CD4-positive, alpha-beta memory T cell (primary cell): ENCODE measurements at regions of chr7 and their contacts with region 1.

Region 1: DNA sequence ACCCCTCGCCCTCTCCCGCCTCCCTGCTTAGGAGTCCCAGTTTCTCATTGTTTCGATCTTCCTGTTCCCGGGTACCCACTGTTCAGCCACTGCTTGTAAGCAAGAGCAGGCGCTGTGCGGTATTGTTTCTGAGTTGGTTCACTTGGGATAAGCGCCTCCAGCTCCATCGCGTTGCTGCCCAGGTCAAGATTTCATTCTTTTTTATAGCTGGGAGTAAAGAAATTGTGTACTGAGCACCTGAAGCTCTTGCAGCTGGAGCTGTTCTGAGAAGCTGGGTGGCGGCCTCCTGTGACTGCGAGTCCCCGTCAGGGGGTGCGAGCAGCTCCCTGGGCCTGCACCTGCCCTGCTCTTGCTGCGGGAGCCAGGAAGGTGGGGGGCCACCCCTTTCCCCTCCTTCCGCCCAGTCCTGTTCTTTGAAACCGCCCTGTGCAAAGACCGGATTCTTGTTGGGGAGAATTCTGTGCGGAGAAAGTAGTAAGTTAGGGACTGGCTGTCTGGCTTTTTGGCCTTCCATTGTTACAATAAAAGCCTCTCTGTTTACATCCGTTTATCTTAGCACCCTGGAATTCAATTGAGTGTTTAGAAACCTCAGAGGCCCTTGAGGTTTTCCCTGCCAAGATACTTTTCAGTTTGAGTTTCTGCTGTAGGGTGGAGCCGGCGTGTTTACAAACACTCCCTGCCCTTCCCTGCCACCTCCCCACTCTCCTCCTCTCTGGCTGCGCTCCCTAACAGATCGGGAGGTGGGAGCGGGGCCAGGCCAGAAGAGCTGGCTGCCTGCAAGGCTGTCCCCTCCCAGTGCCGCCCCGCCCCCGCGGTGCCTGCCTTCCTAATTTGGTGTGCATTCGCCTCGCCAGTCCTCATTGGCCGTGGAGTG is 30.8 kb upstream of the AP5Z1 start:
- DNase-seq: peak; percentile 75 to 84 (median 80)
- H3K4me3 ChIP-seq: peak overlapping the region; percentile 20 to 59
- H3K4me3 Mint-ChIP-seq: peak overlapping the region; percentile 80 to 91 (median 87)
- H3K27ac ChIP-seq: peak overlapping the region; percentile 63
- H3K27ac Mint-ChIP-seq: peak overlapping the region; percentile 86 to 99 (median 95)
- H3K4me1 ChIP-seq: peaks cover 66% of the 10 kb centered on the region
- H3K4me1 Mint-ChIP-seq: peaks cover 41 to 76% (median 58%) of the 10 kb centered on the region in 4 donors
- H3K27me3 ChIP-seq: no peaks in the 10 kb centered on the region
- H3K27me3 Mint-ChIP-seq: no peaks in the 10 kb centered on the region

Region 2: GRCh38 chr7:4659551-4660286 is 84.9 kb before region 1 on chr7:
- CTCF ChIA-PET with region 1: no interaction called
- POLR2A ChIA-PET with region 1: no interaction called
- intact Hi-C with region 1: no loop called
- DNase-seq: no peak
- H3K4me3 ChIP-seq: no peak overlapping the region
- H3K4me3 Mint-ChIP-seq: no peak overlapping the region
- H3K27ac ChIP-seq: no peak overlapping the region
- H3K27ac Mint-ChIP-seq: peak overlapping the region in 1 of 7 donors; percentile 48
- H3K4me1 ChIP-seq: no peaks in the 10 kb centered on the region
- H3K4me1 Mint-ChIP-seq: peaks cover 0 to 5% (median under 1%) of the 10 kb centered on the region in 4 donors
- H3K27me3 ChIP-seq: no peaks in the 10 kb centered on the region
- H3K27me3 Mint-ChIP-seq: peaks cover 0 to 7% of the 10 kb centered on the region in 2 donors

Region 3: DNA sequence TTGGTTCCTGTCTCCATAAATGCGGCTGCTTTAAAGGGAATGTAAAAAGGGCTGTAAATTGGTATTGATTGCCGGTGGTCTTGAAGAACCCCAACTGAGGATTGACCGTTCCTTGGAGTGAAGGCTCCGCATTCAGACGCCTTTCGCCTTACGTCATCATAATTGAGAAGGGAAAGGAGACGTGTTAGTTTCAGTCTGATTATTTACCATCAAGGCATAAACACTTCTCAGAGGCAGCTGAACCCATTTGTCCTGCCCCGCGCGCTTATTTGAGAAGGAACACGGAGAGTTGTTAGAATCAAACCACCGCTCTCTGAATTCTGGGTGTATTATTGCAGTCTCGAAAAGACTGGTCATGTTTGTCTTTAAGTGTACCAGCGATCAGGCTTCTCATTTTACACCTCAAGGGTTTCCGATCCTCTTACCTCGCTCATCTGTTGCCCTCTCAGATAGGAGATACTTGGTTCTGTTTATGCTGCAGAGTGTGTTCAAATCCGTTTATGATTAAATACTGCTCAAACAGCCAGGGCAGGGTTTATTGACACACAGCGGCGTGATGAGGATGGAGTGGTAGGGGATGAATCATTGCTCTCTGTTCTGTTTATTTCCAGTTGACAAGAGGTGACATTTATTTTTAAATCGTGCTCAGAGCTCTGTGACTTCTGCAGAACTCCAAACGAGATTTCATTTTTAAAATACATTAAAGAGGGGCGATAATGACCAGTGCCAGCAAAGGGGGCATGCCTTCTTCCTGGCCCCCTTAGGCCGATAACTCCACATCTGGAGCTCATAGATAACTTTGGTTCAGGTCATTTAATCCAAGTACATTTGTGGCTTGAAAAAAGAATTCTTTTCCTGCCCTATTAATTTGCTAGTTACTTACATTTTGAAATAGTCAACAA is 32.1 kb before region 1 on chr7:
- CTCF ChIA-PET with region 1: no interaction called
- POLR2A ChIA-PET with region 1: no interaction called
- intact Hi-C with region 1: no loop called
- DNase-seq: no peak
- H3K4me3 ChIP-seq: no peak overlapping the region
- H3K4me3 Mint-ChIP-seq: peak overlapping the region in 6 of 8 donors; percentile 7 to 68 (median 38)
- H3K27ac ChIP-seq: no peak overlapping the region
- H3K27ac Mint-ChIP-seq: peak overlapping the region in 6 of 7 donors; percentile 36 to 80 (median 64)
- H3K4me1 ChIP-seq: peaks cover 35% of the 10 kb centered on the region
- H3K4me1 Mint-ChIP-seq: peaks cover 37 to 88% (median 64%) of the 10 kb centered on the region in 4 donors
- H3K27me3 ChIP-seq: no peaks in the 10 kb centered on the region
- H3K27me3 Mint-ChIP-seq: no peaks in the 10 kb centered on the region

Region 4: DNA sequence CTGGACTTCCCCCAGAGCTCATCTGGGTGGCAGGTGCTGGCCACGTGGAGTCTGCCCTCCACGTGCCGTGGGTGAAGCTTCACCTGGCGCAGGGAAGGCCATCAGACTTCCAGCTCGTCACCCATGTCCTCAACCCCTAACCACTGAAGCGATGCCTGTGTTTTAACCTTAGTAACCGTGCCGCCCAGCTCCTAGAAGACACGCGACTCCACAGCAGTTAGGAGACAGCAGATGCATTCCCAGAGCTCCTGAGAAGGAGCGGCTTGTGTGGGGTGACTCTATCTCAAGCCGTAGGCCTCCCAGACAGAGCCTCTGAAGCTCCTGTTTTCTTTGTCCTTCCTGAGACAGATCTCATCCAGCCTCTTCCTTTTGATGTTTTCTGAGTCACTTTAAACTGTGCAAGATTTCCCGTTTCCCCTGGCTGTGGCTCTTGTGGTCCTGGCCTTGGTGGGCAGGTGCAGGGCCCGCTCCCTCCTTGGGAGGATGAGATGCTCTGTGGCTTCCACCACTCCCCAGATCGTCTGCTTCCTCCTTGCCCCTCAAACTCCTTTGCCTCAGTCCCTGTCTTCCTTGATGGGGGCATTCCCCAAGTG is 10.6 kb before region 1 on chr7:
- CTCF ChIA-PET with region 1: interaction called, 12 read pairs
- POLR2A ChIA-PET with region 1: interaction called, 3 read pairs
- intact Hi-C with region 1: no loop called
- DNase-seq: no peak
- H3K4me3 ChIP-seq: no peak overlapping the region
- H3K4me3 Mint-ChIP-seq: peak overlapping the region in 6 of 8 donors; percentile 22 to 64 (median 56)
- H3K27ac ChIP-seq: no peak overlapping the region
- H3K27ac Mint-ChIP-seq: peak overlapping the region in 6 of 7 donors; percentile 31 to 88 (median 76)
- H3K4me1 ChIP-seq: peaks cover 44% of the 10 kb centered on the region
- H3K4me1 Mint-ChIP-seq: peaks cover 30 to 75% (median 52%) of the 10 kb centered on the region in 4 donors
- H3K27me3 ChIP-seq: no peaks in the 10 kb centered on the region
- H3K27me3 Mint-ChIP-seq: no peaks in the 10 kb centered on the region